ENCODE measurements at regions of chr14 and their contacts with region 1.

Region 1: GRCh38 chr14:24146978-24147760 is at the start of gene RNF31:
- DNase-seq: peak; percentile 95 to 99
- ATAC-seq: peak; percentile 86 to 95 (median 86)
- H3K4me3 ChIP-seq: peak within 1 kb of the TSS; percentile 91
- H3K4me3 Mint-ChIP-seq: peak within 1 kb of the TSS; percentile 97
- H3K27ac ChIP-seq: peak within 1 kb of the TSS; percentile 88
- H3K27ac Mint-ChIP-seq: peak within 1 kb of the TSS; percentile 94
- H3K4me1 ChIP-seq: peaks cover 29% of the 10 kb centered on the region
- H3K4me1 Mint-ChIP-seq: peaks cover 53 to 73% of the 10 kb centered on the region in 2 donors
- H3K27me3 ChIP-seq: no peaks in the 10 kb centered on the region
- H3K27me3 Mint-ChIP-seq: no peaks in the 10 kb centered on the region
- CTCF ChIP-seq: no peak
- total RNA-seq, gene RNF31: 96.9 to 134 (median 125) TPM

Region 2: GRCh38 chr14:23719225-23719946 is 427.8 kb before region 1 on chr14:
- intact Hi-C with region 1: no loop called
- DNase-seq: no peak
- ATAC-seq: no peak
- H3K4me3 ChIP-seq: no peak overlapping the region
- H3K4me3 Mint-ChIP-seq: no peak overlapping the region
- H3K27ac ChIP-seq: no peak overlapping the region
- H3K27ac Mint-ChIP-seq: no peak overlapping the region
- H3K4me1 ChIP-seq: no peaks in the 10 kb centered on the region
- H3K4me1 Mint-ChIP-seq: no peaks in the 10 kb centered on the region
- H3K27me3 ChIP-seq: no peaks in the 10 kb centered on the region
- H3K27me3 Mint-ChIP-seq: no peaks in the 10 kb centered on the region
- CTCF ChIP-seq: no peak

Region 3: DNA sequence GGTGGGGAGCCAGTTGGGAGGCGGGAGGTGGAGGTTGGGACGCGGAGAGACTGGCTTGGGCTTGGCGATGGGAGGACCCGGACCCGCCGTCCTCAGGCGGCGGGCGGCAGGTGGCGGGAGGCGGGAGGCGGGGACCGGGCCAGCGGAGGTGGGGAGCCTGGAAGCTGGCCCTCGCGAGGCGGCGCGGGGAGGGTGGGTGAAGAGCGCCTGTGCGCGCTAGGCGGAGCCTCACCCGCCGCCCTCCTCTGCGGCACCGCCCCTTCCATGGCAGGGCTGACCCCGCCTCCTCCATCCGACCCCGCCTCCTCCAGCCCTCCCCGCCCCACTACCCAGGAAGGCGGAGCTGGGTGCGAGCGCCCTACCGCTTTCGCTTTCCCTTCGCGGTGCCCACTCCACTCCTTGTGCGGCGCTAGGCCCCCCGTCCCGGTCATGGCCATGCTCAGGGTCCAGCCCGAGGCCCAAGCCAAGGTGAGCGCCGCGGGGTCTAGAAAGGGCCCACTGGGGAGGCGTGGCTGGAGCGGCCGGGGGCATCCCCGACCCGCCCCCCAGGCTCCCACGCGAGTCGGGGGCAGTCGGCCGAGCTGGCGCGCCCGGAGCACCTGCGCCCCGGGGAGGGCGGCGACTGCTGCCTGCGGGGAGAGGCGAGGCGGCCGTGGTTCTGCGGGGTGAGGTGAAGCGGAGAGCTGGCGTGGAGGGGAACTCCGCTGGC is 11.2 kb before region 1 on chr14 and contains the start of gene PSME1:
- intact Hi-C with region 1: loop called (anchors 1 kb)
- DNase-seq: peak; percentile 95 to 97
- ATAC-seq: peak; percentile 95 to 99 (median 97)
- H3K4me3 ChIP-seq: peak within 1 kb of the TSS; percentile 82
- H3K4me3 Mint-ChIP-seq: peak within 1 kb of the TSS; percentile 97
- H3K27ac ChIP-seq: peak within 1 kb of the TSS; percentile 93
- H3K27ac Mint-ChIP-seq: peak within 1 kb of the TSS; percentile 91 to 94
- H3K4me1 ChIP-seq: peaks cover 46% of the 10 kb centered on the region
- H3K4me1 Mint-ChIP-seq: peaks cover 36 to 39% of the 10 kb centered on the region in 2 donors
- H3K27me3 ChIP-seq: no peaks in the 10 kb centered on the region
- H3K27me3 Mint-ChIP-seq: no peaks in the 10 kb centered on the region
- CTCF ChIP-seq: no peak
- total RNA-seq, gene PSME1: 315 to 345 (median 318) TPM

Region 4: GRCh38 chr14:24160850-24161804 is 14.0 kb after region 1 on chr14 and contains the start of gene IRF9:
- intact Hi-C with region 1: loop called (anchors 1 kb)
- DNase-seq: peak; percentile 93 to 99
- ATAC-seq: peak; percentile 91 to 97 (median 91)
- H3K4me3 ChIP-seq: peak within 1 kb of the TSS; percentile 94
- H3K4me3 Mint-ChIP-seq: peak within 1 kb of the TSS; percentile 99
- H3K27ac ChIP-seq: peak within 1 kb of the TSS; percentile 94
- H3K27ac Mint-ChIP-seq: peak within 1 kb of the TSS; percentile 97
- H3K4me1 ChIP-seq: peaks cover 37% of the 10 kb centered on the region
- H3K4me1 Mint-ChIP-seq: peaks cover 43 to 54% of the 10 kb centered on the region in 2 donors
- H3K27me3 ChIP-seq: no peaks in the 10 kb centered on the region
- H3K27me3 Mint-ChIP-seq: no peaks in the 10 kb centered on the region
- CTCF ChIP-seq: peak; percentile 85
- total RNA-seq, gene IRF9: 178 to 348 (median 319) TPM

Region 5: DNA sequence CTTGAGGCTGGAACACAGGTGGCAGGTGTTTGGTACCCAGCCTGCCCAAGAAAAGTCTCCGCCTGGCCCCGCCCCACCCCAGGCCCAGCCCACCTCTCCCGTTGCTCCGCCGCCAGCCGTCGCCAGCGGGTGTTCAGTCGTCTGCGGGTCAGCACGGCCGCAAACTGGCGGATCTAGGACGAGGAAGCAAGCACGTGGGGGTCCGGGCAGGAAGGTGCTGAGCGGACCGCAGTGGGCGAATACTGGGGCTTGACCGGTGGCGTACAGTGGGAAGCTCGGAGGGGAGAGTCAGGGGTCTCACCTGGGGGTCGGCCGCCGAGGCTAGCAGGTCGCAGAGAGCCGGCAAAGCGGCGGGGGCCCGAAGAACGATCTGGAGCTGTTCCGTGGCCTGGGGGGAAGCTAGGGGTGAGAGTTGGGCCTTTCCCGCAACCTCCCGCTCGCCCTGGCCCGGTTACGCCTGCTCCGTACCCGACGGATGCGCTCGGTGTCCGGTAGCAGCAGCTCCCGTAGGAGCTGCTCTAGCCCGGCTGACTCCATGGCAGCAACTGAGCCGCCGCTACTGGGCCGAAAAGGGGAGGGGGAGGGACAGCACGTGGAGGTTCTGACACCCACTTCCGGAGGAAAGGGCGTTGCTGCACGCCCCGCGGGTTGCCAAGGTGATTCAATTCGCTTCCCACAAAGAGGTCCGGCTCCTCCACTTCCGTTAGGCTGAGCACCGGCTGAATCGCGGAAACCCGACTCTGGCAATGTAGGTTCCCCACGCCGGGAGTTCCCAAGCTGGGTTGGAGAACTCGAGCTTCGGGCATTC is 41.3 kb after region 1 on chr14 and contains the start of gene IPO4:
- intact Hi-C with region 1: loop called (anchors 2 kb)
- DNase-seq: peak; percentile 87 to 98
- ATAC-seq: peak; percentile 92 to 97 (median 93)
- H3K4me3 ChIP-seq: peak within 1 kb of the TSS; percentile 56
- H3K4me3 Mint-ChIP-seq: peak within 1 kb of the TSS; percentile 85
- H3K27ac ChIP-seq: peak within 1 kb of the TSS; percentile 68
- H3K27ac Mint-ChIP-seq: peak within 1 kb of the TSS; percentile 83 to 97
- H3K4me1 ChIP-seq: peaks cover 23% of the 10 kb centered on the region
- H3K4me1 Mint-ChIP-seq: peaks cover 26 to 34% of the 10 kb centered on the region in 2 donors
- H3K27me3 ChIP-seq: no peaks in the 10 kb centered on the region
- H3K27me3 Mint-ChIP-seq: no peaks in the 10 kb centered on the region
- CTCF ChIP-seq: no peak
- total RNA-seq, gene IPO4: 46.2 to 61.5 (median 51.9) TPM

Measured in natural killer cell (primary cell).